ENCODE measurements at regions of chr1 and their contacts with region 1.

Region 1: DNA sequence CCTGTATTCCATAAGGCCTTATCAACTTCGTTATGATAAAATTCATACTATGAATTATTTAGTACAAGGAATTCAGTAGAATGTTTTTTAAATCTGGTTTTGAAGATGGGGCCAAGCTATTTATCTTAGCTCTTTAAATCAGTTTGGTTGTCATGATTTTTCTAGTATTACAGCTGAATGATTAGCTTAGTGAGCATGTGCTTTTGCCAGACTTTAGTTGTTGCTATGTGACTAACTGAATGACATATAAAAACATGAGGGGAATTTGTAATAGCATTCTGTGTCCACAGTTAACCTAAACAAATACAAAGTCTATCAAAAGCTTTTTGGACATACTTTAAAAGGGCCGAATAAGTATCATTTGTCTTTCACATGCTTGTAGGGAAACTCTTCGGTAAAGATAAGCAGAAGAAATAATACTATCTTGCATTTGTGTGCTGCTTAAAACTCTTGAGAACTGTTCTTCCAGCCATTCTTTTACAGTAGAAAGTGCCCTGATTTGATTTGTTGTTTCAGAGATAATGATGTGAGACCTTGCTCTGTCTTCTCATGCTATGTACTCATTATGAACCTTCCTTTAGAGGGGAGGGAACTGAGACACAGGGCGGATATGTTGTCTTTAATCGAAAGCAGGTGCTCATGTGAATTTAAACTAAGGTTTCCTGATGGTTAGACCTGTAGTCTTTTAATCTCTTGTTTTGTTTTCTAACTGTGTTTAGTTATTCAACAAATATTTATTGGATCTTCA is 18.8 kb downstream of the NEK7 start:
- DNase-seq: no peak
- H3K4me3 Mint-ChIP-seq: no peak overlapping the region
- H3K27ac Mint-ChIP-seq: peak overlapping the region; percentile 69
- H3K4me1 Mint-ChIP-seq: peaks cover 84% of the 10 kb centered on the region
- H3K27me3 Mint-ChIP-seq: no peaks in the 10 kb centered on the region

Region 2: DNA sequence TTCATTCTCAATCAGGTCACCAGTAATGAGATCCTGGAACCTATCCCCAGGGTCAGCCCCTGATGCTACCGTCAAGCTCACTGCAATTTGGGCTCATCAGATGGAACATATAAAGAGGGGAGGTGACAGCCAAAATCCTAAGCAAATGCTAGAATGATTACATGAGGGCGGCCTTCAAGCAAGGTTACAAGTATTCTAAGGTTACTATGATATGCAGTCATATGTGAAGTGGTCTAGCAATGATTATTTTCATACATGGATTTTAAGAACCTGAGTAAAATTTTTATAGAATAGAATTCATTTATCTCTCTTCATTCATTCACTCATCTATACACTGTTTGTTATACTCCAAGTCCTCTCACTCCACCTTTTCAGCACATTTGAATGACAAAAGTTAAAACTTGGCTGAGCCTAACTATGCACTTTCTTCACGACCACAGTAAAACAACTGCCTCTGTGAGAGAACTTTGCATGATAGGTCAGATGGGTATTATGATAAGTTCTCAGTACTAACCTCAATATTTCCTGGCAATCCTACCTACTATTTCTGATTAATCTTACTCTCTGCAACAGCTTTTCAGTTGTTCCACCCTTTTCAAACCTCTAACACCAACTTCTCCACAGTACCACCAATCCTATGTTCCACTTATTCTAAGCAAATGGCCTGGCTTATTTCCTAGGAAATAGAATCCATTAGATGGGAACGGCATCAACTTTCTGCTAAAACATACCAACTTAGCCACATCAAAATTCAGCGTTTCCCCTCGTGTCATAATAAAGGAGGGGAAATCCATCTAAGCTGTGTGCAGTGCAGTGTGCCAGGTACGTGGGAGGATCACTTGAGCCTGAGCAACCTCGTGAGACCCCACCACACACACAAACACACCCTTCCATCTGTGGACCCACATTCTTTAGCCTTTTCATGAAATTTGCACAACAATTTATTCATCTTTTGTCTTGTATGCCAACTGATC is 226.4 kb before region 1 on chr1:
- intact Hi-C with region 1: no loop called
- DNase-seq: no peak
- H3K4me3 Mint-ChIP-seq: peak overlapping the region; percentile 8
- H3K27ac Mint-ChIP-seq: peak overlapping the region; percentile 70
- H3K4me1 Mint-ChIP-seq: peaks cover 15% of the 10 kb centered on the region
- H3K27me3 Mint-ChIP-seq: no peaks in the 10 kb centered on the region

Region 3: GRCh38 chr1:198187973-198188588 is 12.5 kb after region 1 on chr1:
- intact Hi-C with region 1: loop called (anchors 1 kb)
- DNase-seq: no peak
- H3K4me3 Mint-ChIP-seq: peak overlapping the region; percentile 49
- H3K27ac Mint-ChIP-seq: peak overlapping the region; percentile 78
- H3K4me1 Mint-ChIP-seq: peaks cover 67% of the 10 kb centered on the region
- H3K27me3 Mint-ChIP-seq: no peaks in the 10 kb centered on the region